ENCODE measurements at regions of chr4 and their contacts with region 1.

Region 1: GRCh38 chr4:20859097-20859781 is 159.0 kb downstream of the PACRGL start:
- DNase-seq: no peak

Region 2: DNA sequence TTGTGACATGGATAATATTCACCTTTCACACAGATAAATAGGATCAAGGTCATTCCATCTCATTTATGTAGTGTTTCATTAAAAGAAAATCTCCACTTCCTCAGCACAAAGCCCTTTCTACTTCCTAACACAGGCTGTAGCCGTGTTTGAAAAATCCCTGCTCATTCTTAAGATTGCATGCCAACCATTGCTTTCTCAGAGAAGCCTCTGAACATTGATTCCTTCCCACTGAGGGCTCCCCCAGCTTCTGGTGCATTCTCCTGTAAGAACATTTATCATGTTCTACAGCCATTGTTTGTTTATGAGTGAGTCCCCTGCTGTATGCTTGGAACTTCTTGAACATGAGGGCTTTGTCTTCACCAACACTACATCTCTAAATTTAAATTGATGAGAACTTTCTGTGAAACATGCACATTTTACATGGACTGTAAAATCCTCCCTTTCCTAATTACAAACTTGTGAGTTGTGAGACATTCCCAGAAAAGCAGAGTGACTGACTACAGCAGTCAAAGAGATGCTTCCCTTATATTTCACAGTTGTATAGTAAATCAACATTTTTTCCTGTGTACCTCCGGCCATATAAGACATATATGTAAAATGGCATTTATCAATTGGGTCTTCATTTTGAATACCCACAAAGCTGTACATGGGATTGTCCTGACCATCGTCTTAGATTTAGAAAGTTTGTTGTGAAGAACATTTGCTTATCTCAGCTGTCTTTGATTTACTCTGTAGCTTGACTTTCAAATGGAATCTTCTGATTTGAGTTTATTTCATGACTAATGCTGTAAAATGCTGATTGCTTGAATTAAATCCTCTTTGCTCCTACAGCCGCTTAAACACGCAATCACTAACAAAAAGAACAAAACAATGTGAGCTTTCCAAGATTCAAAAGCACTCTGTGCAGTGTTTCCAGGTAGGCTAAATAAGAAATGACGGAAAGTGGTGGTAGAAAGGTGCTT is 1208.1 kb before region 1 on chr4:
- intact Hi-C with region 1: no loop called
- DNase-seq: no peak

Region 3: GRCh38 chr4:20825505-20825904 is 33.7 kb before region 1 on chr4:
- intact Hi-C with region 1: no loop called
- DNase-seq: no peak

Region 4: GRCh38 chr4:20916106-20916505 is 56.9 kb after region 1 on chr4:
- intact Hi-C with region 1: no loop called
- DNase-seq: no peak

Region 5: DNA sequence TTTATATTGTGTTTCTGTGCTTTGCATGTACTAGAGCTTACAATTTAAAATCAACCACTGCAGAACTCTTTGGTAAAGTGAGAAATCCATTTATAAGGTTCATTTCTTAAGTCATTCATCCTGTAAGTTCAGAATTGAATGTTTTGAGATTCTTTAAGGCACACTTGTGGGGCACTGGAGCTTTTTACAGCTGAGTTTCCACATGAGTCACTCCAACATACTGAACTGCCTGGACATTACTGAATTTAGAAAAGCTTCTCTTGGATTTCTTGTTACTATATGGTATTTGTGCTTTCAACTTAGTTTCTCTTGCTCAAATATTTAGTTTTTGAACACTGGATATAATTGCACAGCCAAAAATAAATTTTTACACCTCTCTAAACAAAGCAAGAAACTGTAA is 67.3 kb after region 1 on chr4:
- intact Hi-C with region 1: loop called in 1 of 2 experiments (anchors 2 kb)
- DNase-seq: no peak

Measured in posterior vena cava (tissue), 2 donors.